ENCODE measurements at regions of chr7 and their contacts with region 1.

Region 1: GRCh38 chr7:118109607-118110006 is 74.4 kb upstream of the LSM8 start:
- DNase-seq: no peak
- ATAC-seq: no peak
- H3K4me3 ChIP-seq: no peak overlapping the region
- H3K4me3 Mint-ChIP-seq: no peak overlapping the region
- H3K27ac ChIP-seq: no peak overlapping the region
- H3K27ac Mint-ChIP-seq: no peak overlapping the region
- H3K4me1 ChIP-seq: no peaks in the 10 kb centered on the region
- H3K4me1 Mint-ChIP-seq: no peaks in the 10 kb centered on the region
- H3K27me3 ChIP-seq: no peaks in the 10 kb centered on the region
- H3K27me3 Mint-ChIP-seq: peaks cover 1 to 3% of the 10 kb centered on the region in 2 donors

Region 2: DNA sequence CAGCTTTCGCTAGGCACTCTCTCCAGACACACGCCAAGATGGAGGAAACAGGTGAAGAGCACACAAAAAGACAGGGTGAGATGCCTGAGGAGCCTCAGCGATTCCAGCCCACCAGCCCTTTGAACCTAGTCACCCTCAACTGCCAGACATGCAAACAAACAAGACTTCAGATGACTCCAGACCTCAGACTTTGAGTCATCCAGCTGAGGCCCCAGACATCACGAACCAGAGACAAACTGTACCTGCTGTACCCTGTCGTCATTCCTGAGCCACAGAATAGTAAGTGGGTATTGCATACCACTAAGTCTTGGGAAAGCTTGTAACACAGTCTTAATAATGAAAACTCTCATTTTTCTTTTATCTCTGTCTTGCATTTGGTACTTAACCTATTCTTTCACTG is 52.2 kb before region 1 on chr7:
- CTCF ChIA-PET with region 1: interaction called in 1 of 2 experiments, 15 read pairs
- POLR2A ChIA-PET with region 1: no interaction called
- DNase-seq: no peak
- ATAC-seq: no peak
- H3K4me3 ChIP-seq: no peak overlapping the region
- H3K4me3 Mint-ChIP-seq: no peak overlapping the region
- H3K27ac ChIP-seq: no peak overlapping the region
- H3K27ac Mint-ChIP-seq: no peak overlapping the region
- H3K4me1 ChIP-seq: no peaks in the 10 kb centered on the region
- H3K4me1 Mint-ChIP-seq: no peaks in the 10 kb centered on the region
- H3K27me3 ChIP-seq: no peaks in the 10 kb centered on the region
- H3K27me3 Mint-ChIP-seq: peaks cover 0 to 7% of the 10 kb centered on the region in 2 donors